ENCODE measurements at regions of chr16 and their contacts with region 1.

Region 1: GRCh38 chr16:63663152-63663551 is 1458.7 kb downstream of the CDH11 start:
- DNase-seq: no peak
- ATAC-seq: no peak
- H3K4me3 ChIP-seq: no peak overlapping the region
- H3K4me3 Mint-ChIP-seq: no peak overlapping the region
- H3K27ac ChIP-seq: no peak overlapping the region
- H3K27ac Mint-ChIP-seq: no peak overlapping the region
- H3K4me1 ChIP-seq: no peaks in the 10 kb centered on the region
- H3K4me1 Mint-ChIP-seq: no peaks in the 10 kb centered on the region
- H3K27me3 ChIP-seq: no peaks in the 10 kb centered on the region
- H3K27me3 Mint-ChIP-seq: no peaks in the 10 kb centered on the region
- CTCF ChIP-seq: no peak

Region 2: GRCh38 chr16:62738666-62739460 is 924.3 kb before region 1 on chr16:
- CTCF ChIA-PET with region 1: no interaction called
- POLR2A ChIA-PET with region 1: no interaction called
- intact Hi-C with region 1: no loop called
- DNase-seq: no peak
- ATAC-seq: no peak
- H3K4me3 ChIP-seq: no peak overlapping the region
- H3K4me3 Mint-ChIP-seq: no peak overlapping the region
- H3K27ac ChIP-seq: no peak overlapping the region
- H3K27ac Mint-ChIP-seq: no peak overlapping the region
- H3K4me1 ChIP-seq: no peaks in the 10 kb centered on the region
- H3K4me1 Mint-ChIP-seq: no peaks in the 10 kb centered on the region
- H3K27me3 ChIP-seq: no peaks in the 10 kb centered on the region
- H3K27me3 Mint-ChIP-seq: no peaks in the 10 kb centered on the region
- CTCF ChIP-seq: no peak

Region 3: GRCh38 chr16:63602206-63602927 is 60.8 kb before region 1 on chr16:
- CTCF ChIA-PET with region 1: no interaction called
- POLR2A ChIA-PET with region 1: no interaction called
- intact Hi-C with region 1: no loop called
- DNase-seq: no peak
- ATAC-seq: no peak
- H3K4me3 ChIP-seq: no peak overlapping the region
- H3K4me3 Mint-ChIP-seq: no peak overlapping the region
- H3K27ac ChIP-seq: no peak overlapping the region
- H3K27ac Mint-ChIP-seq: no peak overlapping the region
- H3K4me1 ChIP-seq: no peaks in the 10 kb centered on the region
- H3K4me1 Mint-ChIP-seq: no peaks in the 10 kb centered on the region
- H3K27me3 ChIP-seq: no peaks in the 10 kb centered on the region
- H3K27me3 Mint-ChIP-seq: no peaks in the 10 kb centered on the region
- CTCF ChIP-seq: no peak

Region 4: DNA sequence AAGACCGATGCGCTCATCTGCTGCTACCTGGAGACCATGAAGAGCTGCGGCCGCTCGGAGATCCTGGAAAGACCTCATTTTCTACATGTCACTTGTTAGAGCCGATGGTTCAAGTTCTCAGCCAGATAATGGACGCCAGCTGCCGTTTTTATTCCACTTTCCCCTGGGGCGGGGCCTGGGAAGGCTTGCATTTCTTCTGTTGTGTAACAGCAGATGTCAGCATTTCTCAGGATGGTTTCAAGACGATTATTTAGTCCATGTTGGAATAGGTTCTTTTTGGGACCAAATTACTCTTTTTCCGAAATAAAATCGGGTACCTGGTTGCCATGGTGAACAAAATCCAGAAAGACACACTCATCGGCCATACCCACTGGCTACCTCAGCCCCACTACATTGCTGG is 40.5 kb after region 1 on chr16:
- CTCF ChIA-PET with region 1: no interaction called
- POLR2A ChIA-PET with region 1: no interaction called
- intact Hi-C with region 1: loop called in 1 of 2 experiments (anchors 1 kb)
- DNase-seq: no peak
- ATAC-seq: no peak
- H3K4me3 ChIP-seq: no peak overlapping the region
- H3K4me3 Mint-ChIP-seq: no peak overlapping the region
- H3K27ac ChIP-seq: no peak overlapping the region
- H3K27ac Mint-ChIP-seq: no peak overlapping the region
- H3K4me1 ChIP-seq: no peaks in the 10 kb centered on the region
- H3K4me1 Mint-ChIP-seq: no peaks in the 10 kb centered on the region
- H3K27me3 ChIP-seq: no peaks in the 10 kb centered on the region
- H3K27me3 Mint-ChIP-seq: no peaks in the 10 kb centered on the region
- CTCF ChIP-seq: no peak

Region 5: DNA sequence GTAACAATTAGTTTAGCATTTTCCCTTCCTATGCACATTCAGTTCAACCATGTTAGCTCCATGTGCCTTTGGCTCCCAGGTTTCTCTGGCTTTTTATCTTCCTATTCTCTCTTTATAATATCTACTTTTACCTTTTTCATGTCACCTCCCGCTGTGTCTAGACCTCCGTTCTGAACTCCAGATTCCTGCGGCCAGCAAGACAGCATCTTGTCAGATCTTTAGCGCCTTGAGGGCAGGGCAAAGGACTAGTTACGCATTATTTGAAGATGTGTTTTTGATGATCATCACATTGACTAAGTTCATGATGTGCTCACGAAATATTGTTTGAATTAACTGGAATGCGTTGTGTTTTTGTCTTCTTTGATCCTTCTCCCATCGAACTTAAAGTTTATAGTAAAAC is 331.9 kb after region 1 on chr16:
- CTCF ChIA-PET with region 1: no interaction called
- POLR2A ChIA-PET with region 1: no interaction called
- intact Hi-C with region 1: no loop called
- DNase-seq: no peak
- ATAC-seq: no peak
- H3K4me3 ChIP-seq: no peak overlapping the region
- H3K4me3 Mint-ChIP-seq: no peak overlapping the region
- H3K27ac ChIP-seq: no peak overlapping the region
- H3K27ac Mint-ChIP-seq: no peak overlapping the region
- H3K4me1 ChIP-seq: no peaks in the 10 kb centered on the region
- H3K4me1 Mint-ChIP-seq: no peaks in the 10 kb centered on the region
- H3K27me3 ChIP-seq: no peaks in the 10 kb centered on the region
- H3K27me3 Mint-ChIP-seq: no peaks in the 10 kb centered on the region
- CTCF ChIP-seq: no peak